ENCODE measurements at regions of chr11 and their contacts with region 1.

Region 1: DNA sequence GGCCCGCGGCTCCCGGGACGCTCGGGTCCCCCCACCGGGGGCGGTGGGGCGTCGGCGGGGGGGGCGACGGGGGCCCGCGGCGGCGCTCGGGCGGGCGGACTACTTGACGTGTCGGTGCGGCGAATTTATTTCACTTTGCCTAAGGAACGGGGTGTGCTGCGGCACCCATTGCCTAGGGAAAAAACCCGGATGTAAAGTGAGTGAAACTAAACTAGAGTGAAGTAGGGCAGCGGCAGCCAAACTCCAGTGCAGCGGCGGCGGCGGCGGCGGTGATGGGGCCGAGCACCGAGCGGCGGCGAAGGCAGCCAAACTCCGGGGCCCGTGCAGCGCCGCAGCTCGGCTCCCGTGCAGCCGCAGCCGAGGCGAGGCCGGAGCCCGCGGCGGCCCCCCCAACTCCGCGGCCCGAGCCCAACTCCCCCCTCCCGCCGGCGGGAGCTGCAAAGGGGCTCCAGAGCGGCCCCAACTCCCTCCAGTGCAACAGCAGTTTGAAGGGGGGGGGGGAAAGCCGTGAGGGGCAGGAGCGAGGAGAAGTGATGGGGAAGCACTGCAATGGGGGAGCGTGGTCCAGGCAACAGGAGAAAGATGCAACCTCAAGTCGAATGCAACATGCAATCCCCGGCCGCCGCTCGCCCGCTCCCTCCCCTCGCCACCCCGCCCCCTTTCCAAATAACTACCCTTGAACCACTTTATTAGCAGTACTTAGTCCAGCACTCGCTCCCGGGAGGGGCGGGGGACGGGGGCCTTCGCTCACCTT is 647 bp upstream of the PHF21A start:
- DNase-seq: peak; percentile 79
- ATAC-seq: peak; percentile 47
- H3K4me3 Mint-ChIP-seq: peak overlapping the region; percentile 79
- H3K27ac Mint-ChIP-seq: peak overlapping the region; percentile 90
- H3K4me1 Mint-ChIP-seq: peaks cover 33% of the 10 kb centered on the region
- H3K27me3 Mint-ChIP-seq: no peaks in the 10 kb centered on the region
- CTCF ChIP-seq: no peak

Region 2: DNA sequence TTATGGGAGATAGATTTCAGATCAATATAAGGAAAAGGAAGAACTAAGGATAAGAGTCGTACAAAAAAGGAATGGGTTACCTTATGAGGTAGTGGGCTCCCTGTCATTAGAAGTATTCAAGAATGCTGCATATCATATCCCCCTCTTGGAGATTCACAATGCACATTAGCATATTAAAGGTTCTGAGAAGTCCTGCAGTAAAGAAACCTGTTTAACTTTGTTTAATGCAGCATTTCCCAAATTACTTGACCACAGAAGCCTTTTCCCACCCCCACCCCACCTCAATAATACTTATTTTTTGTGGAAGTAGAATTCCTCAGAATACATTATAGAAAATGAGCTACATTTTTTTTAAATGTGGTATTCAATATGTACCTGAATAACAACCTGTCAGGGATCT is 31.5 kb before region 1 on chr11:
- CTCF ChIA-PET with region 1: no interaction called
- POLR2A ChIA-PET with region 1: no interaction called
- intact Hi-C with region 1: no loop called
- DNase-seq: no peak
- ATAC-seq: no peak
- H3K4me3 Mint-ChIP-seq: no peak overlapping the region
- H3K27ac Mint-ChIP-seq: no peak overlapping the region
- H3K4me1 Mint-ChIP-seq: peaks cover 2% of the 10 kb centered on the region
- H3K27me3 Mint-ChIP-seq: no peaks in the 10 kb centered on the region
- CTCF ChIP-seq: no peak

Region 3: GRCh38 chr11:46105134-46105628 is 16.7 kb before region 1 on chr11:
- CTCF ChIA-PET with region 1: interaction called, 11 read pairs
- POLR2A ChIA-PET with region 1: no interaction called
- intact Hi-C with region 1: no loop called
- DNase-seq: no peak
- ATAC-seq: peak; percentile 27
- H3K4me3 Mint-ChIP-seq: no peak overlapping the region
- H3K27ac Mint-ChIP-seq: no peak overlapping the region
- H3K4me1 Mint-ChIP-seq: peaks cover 37% of the 10 kb centered on the region
- H3K27me3 Mint-ChIP-seq: no peaks in the 10 kb centered on the region
- CTCF ChIP-seq: no peak

Region 4: GRCh38 chr11:46977038-46977813 is 855.3 kb after region 1 on chr11:
- CTCF ChIA-PET with region 1: no interaction called
- POLR2A ChIA-PET with region 1: no interaction called
- intact Hi-C with region 1: no loop called
- DNase-seq: no peak
- ATAC-seq: no peak
- H3K4me3 Mint-ChIP-seq: no peak overlapping the region
- H3K27ac Mint-ChIP-seq: no peak overlapping the region
- H3K4me1 Mint-ChIP-seq: peaks cover 8% of the 10 kb centered on the region
- H3K27me3 Mint-ChIP-seq: no peaks in the 10 kb centered on the region
- CTCF ChIP-seq: no peak